ENCODE measurements at regions of chr1 and their contacts with region 1.

Region 1: DNA sequence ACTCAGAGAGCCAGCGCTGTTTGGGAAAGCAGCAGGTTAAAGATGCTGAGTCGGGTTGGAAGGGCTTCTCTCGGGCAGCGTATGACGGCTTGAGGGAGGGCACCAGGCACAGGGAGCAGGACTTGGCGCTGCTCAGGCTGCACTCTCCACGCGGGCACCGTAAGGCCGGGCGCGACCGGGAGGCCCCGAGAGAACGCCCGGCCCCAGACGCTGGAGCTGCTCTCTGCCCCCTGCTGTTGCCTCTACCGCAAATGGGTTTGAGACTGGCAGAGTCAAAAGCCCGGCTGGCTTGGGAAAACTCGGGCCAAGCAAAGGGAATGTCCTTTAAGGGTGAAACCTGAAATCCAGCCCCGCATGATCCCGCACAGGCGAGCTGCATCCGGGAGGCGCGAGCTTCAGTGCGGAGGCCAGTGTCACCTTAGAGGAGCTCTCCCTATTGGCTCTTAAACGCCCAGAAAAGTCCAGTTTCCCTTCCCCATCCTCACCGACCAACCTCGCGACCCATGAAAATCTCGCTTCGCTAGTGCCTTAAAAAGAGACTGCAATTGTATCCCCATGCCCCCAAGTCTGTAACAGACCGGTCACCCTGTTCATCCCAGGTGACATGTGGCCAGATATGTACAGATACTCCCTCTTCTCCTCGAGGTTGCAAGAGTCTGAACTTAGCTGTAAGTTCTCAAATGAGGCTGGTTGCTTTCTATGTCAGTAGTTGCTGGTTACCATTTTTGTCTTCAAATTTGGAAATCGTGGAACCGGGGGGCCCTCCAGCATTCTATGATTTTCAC is 1.1 kb downstream of the PRRX1 start:
- DNase-seq: no peak
- ATAC-seq: peak; percentile 47
- H3K4me3 ChIP-seq: no peak overlapping the region
- H3K27ac ChIP-seq: no peak overlapping the region
- H3K4me1 ChIP-seq: no peaks in the 10 kb centered on the region
- H3K27me3 ChIP-seq: peaks cover 13 to 42% of the 10 kb centered on the region in 2 experiments
- CTCF ChIP-seq: 0 out of 6 replicates have a peak, but pooled peaks of 1 of the 3 experiments have one; percentile 4
- EP300 ChIP-seq: no peak
- POLR2A ChIP-seq: no peak
- RAD21 ChIP-seq: no peak

Region 2: GRCh38 chr1:170531758-170532657 is 133.0 kb before region 1 on chr1 and contains the start of gene GORAB:
- CTCF ChIA-PET with region 1: interaction called, 4 read pairs
- POLR2A ChIA-PET with region 1: interaction called, 10 read pairs
- RAD21 ChIA-PET with region 1: interaction called, 41 read pairs
- SMC1A ChIA-PET with region 1: interaction called, 112 read pairs
- in situ Hi-C with region 1: no loop called
- intact Hi-C with region 1: no loop called
- DNase-seq: peak; percentile 82
- ATAC-seq: peak; percentile 94
- H3K4me3 ChIP-seq: peak within 1 kb of the TSS; percentile 85
- H3K27ac ChIP-seq: peak within 1 kb of the TSS; percentile 99
- H3K4me1 ChIP-seq: no peaks in the 10 kb centered on the region
- H3K27me3 ChIP-seq: no peaks in the 10 kb centered on the region
- CTCF ChIP-seq: no peak
- EP300 ChIP-seq: no peak
- POLR2A ChIP-seq: peak; percentile 93
- RAD21 ChIP-seq: no peak
- polyA plus RNA-seq, gene GORAB: 5.5 to 7.6 TPM

Region 3: GRCh38 chr1:170545476-170545875 is 119.5 kb before region 1 on chr1:
- CTCF ChIA-PET with region 1: interaction called, 7 read pairs
- POLR2A ChIA-PET with region 1: interaction called, 50 read pairs
- RAD21 ChIA-PET with region 1: interaction called, 10 read pairs
- SMC1A ChIA-PET with region 1: interaction called, 112 read pairs
- in situ Hi-C with region 1: no loop called
- intact Hi-C with region 1: no loop called
- DNase-seq: no peak
- ATAC-seq: peak; percentile 54
- H3K4me3 ChIP-seq: no peak overlapping the region
- H3K27ac ChIP-seq: no peak overlapping the region
- H3K4me1 ChIP-seq: no peaks in the 10 kb centered on the region
- H3K27me3 ChIP-seq: no peaks in the 10 kb centered on the region
- CTCF ChIP-seq: no peak
- EP300 ChIP-seq: peak; percentile 11 to 91; a peak in 2 of 4 replicates
- POLR2A ChIP-seq: no peak
- RAD21 ChIP-seq: no peak

Region 4: GRCh38 chr1:170593173-170594011 is 71.6 kb before region 1 on chr1:
- CTCF ChIA-PET with region 1: interaction called, 6 read pairs
- POLR2A ChIA-PET with region 1: interaction called, 6 read pairs
- RAD21 ChIA-PET with region 1: interaction called, 46 read pairs
- SMC1A ChIA-PET with region 1: interaction called, 35 read pairs
- in situ Hi-C with region 1: no loop called
- intact Hi-C with region 1: loop called (anchors 10 kb)
- DNase-seq: no peak
- ATAC-seq: peak; percentile 55; the same call in 2 of the 3 replicates
- H3K4me3 ChIP-seq: no peak overlapping the region
- H3K27ac ChIP-seq: no peak overlapping the region
- H3K4me1 ChIP-seq: no peaks in the 10 kb centered on the region
- H3K27me3 ChIP-seq: no peaks in the 10 kb centered on the region
- CTCF ChIP-seq: 0 out of 6 replicates have a peak, but pooled peaks of 1 of the 3 experiments have one; percentile 1
- EP300 ChIP-seq: no peak
- POLR2A ChIP-seq: no peak
- RAD21 ChIP-seq: no peak

Region 5: GRCh38 chr1:170634293-170634692 is 30.7 kb before region 1 on chr1:
- CTCF ChIA-PET with region 1: interaction called, 18 read pairs
- POLR2A ChIA-PET with region 1: no interaction called
- RAD21 ChIA-PET with region 1: interaction called, 14 read pairs
- SMC1A ChIA-PET with region 1: interaction called, 150 read pairs
- in situ Hi-C with region 1: no loop called
- intact Hi-C with region 1: no loop called
- DNase-seq: no peak
- ATAC-seq: peak; percentile 62
- H3K4me3 ChIP-seq: no peak overlapping the region
- H3K27ac ChIP-seq: no peak overlapping the region
- H3K4me1 ChIP-seq: no peaks in the 10 kb centered on the region
- H3K27me3 ChIP-seq: no peaks in the 10 kb centered on the region
- CTCF ChIP-seq: no peak
- EP300 ChIP-seq: no peak
- POLR2A ChIP-seq: no peak
- RAD21 ChIP-seq: no peak